ENCODE measurements at regions of chr4 and their contacts with region 1.

Region 1: DNA sequence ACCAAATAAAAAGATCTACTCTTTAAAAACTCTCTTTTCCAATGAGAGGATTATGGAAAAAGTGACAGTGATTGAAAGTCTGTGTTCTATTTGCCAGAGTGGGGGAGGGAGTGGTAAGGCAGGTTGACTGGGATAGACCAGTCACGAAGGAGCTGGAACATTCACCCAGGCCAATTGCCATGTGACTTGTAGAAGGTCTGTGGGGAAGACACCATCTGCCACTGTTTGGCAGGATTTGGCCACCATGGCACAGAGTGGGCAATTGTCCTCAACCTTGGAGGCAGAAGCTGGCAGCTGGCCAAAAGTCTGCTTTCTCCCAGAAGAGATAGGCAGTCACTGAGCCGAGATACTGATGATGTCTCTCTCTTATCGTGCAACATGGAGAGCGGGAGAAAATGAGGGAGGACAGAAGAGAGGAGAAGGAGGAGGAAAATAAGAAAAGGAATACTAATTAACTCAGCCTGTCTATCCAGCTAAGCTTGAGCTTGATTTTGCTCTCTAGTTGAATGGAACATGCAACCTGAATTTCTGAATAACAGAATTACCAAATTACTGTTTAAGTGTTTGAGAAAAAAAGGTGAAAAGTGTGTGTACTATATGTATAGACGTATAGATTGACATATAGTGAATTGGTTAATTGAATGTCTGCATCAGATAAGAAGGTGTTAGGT is 267.1 kb downstream of the ARHGAP24 start:
- DNase-seq: no peak
- H3K4me3 ChIP-seq: no peak overlapping the region
- CTCF ChIP-seq: no peak

Region 2: GRCh38 chr4:85637778-85638177 is 104.3 kb before region 1 on chr4:
- in situ Hi-C with region 1: loop called (anchors 5 kb)
- DNase-seq: peak; percentile 2
- H3K4me3 ChIP-seq: no peak overlapping the region
- CTCF ChIP-seq: no peak

Region 3: DNA sequence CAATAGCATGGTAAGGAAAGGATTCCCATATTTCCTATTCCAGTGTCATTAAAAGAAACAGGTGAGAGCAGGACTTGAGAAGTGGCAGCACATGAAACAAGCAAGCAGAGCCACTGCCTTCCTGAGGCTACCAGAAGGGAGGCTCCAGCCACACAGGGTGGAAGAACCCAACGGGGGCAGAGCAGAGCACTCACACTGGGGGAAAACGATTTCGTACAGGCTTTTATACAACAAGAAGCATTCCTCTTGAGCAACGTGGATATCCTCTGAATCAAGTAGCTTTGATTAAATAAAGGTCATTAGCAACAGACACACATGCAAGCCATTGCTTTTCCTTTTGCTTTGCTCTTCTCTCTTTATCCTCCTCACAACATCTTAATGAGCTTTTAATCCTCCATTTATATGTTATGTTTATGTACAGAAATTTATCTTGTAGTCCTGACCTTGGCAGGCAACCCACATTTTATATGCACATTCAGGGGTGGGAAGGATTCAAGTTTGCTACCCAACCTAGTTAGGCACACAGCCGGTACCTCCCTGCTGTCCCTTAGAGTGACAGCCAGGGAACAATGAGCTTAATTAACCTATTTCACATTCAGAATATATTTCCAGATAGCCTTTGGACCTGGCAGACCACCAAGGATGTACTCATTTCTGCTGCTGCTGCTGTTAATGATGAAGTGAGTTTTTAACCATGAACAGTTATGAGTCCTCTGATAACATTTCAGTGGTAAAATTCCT is 65.0 kb before region 1 on chr4:
- in situ Hi-C with region 1: loop called (anchors 5 kb)
- DNase-seq: peak; percentile 9
- H3K4me3 ChIP-seq: no peak overlapping the region
- CTCF ChIP-seq: no peak

Region 4: GRCh38 chr4:85798012-85798770 is 56.1 kb after region 1 on chr4:
- in situ Hi-C with region 1: no loop called
- DNase-seq: no peak
- H3K4me3 ChIP-seq: no peak overlapping the region
- CTCF ChIP-seq: no peak